Endothelial cell of umbilical vein (primary cell): ENCODE measurements at regions of chr16 and their contacts with region 1.

Region 1: GRCh38 chr16:87765776-87766484 is at the start of gene KLHDC4:
- DNase-seq: peak; percentile 86
- H3K4me3 ChIP-seq: peak within 1 kb of the TSS; percentile 55 to 82 (median 78)
- H3K27ac ChIP-seq: peak within 1 kb of the TSS; percentile 92
- H3K4me1 ChIP-seq: peaks cover 8% of the 10 kb centered on the region
- H3K27me3 ChIP-seq: no peaks in the 10 kb centered on the region
- CTCF ChIP-seq: no peak
- POLR2A ChIP-seq: peak; percentile 87
- total RNA-seq, gene KLHDC4: 46.2 and 46.7 TPM in 2 replicates

Region 2: GRCh38 chr16:87407511-87408112 is 358.3 kb before region 1 on chr16:
- CTCF ChIA-PET with region 1: no interaction called
- POLR2A ChIA-PET with region 1: no interaction called
- dilution Hi-C with region 1: no loop called
- intact Hi-C with region 1: loop called (anchors 10 kb)
- DNase-seq: peak; percentile 95
- H3K4me3 ChIP-seq: peak overlapping the region in 1 of 3 experiments; percentile 39
- H3K27ac ChIP-seq: peak overlapping the region; percentile 82
- H3K4me1 ChIP-seq: peaks cover 20% of the 10 kb centered on the region
- H3K27me3 ChIP-seq: no peaks in the 10 kb centered on the region
- CTCF ChIP-seq: no peak
- POLR2A ChIP-seq: peak; percentile 28

Region 3: GRCh38 chr16:87550496-87550961 is 215.4 kb before region 1 on chr16:
- CTCF ChIA-PET with region 1: interaction called, 7 read pairs
- POLR2A ChIA-PET with region 1: no interaction called
- dilution Hi-C with region 1: no loop called
- intact Hi-C with region 1: loop called (anchors 1 kb)
- DNase-seq: no peak
- H3K4me3 ChIP-seq: no peak overlapping the region
- H3K27ac ChIP-seq: no peak overlapping the region
- H3K4me1 ChIP-seq: no peaks in the 10 kb centered on the region
- H3K27me3 ChIP-seq: peaks cover 0 to 2% of the 10 kb centered on the region in 2 experiments
- CTCF ChIP-seq: peak; percentile 89 to 95
- POLR2A ChIP-seq: no peak

Region 4: GRCh38 chr16:87587636-87588035 is 178.3 kb before region 1 on chr16:
- CTCF ChIA-PET with region 1: interaction called, 198 read pairs
- POLR2A ChIA-PET with region 1: no interaction called
- dilution Hi-C with region 1: no loop called
- intact Hi-C with region 1: loop called (anchors 1 kb)
- DNase-seq: no peak
- H3K4me3 ChIP-seq: no peak overlapping the region
- H3K27ac ChIP-seq: no peak overlapping the region
- H3K4me1 ChIP-seq: peaks cover 14% of the 10 kb centered on the region
- H3K27me3 ChIP-seq: peaks cover 2 to 3% of the 10 kb centered on the region in 2 experiments
- CTCF ChIP-seq: no peak
- POLR2A ChIP-seq: no peak

Region 5: DNA sequence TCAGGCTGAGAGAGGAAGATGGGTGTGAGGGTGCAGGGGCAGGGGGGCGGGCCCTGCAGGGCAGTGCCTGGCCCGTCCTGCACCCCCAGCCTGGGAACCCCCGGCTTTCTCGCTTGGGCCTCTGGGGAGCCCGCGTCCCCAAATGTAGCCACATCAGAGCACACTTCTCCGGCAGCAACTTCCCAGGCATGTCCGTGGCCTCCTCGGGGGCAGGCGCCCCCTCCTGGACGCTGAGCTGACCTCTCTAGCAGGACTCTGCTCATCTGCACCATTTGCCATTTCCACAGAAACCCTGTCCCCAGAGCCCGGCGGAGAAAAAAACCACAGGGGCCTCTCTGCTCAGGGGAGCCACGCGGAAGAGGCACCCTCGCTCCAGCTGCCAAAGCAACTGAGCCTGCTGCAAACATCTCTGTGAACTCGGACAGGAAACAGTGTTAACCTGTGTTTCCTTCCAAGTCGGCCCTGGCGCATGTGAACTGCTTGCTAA is 63.6 kb before region 1 on chr16:
- CTCF ChIA-PET with region 1: interaction called, 6 read pairs
- POLR2A ChIA-PET with region 1: no interaction called
- dilution Hi-C with region 1: no loop called
- intact Hi-C with region 1: loop called (anchors 2 kb)
- DNase-seq: peak; percentile 84
- H3K4me3 ChIP-seq: no peak overlapping the region
- H3K27ac ChIP-seq: peak overlapping the region; percentile 3
- H3K4me1 ChIP-seq: peaks cover 24% of the 10 kb centered on the region
- H3K27me3 ChIP-seq: no peaks in the 10 kb centered on the region
- CTCF ChIP-seq: peak; percentile 73 to 84
- POLR2A ChIP-seq: no peak

Region 6: DNA sequence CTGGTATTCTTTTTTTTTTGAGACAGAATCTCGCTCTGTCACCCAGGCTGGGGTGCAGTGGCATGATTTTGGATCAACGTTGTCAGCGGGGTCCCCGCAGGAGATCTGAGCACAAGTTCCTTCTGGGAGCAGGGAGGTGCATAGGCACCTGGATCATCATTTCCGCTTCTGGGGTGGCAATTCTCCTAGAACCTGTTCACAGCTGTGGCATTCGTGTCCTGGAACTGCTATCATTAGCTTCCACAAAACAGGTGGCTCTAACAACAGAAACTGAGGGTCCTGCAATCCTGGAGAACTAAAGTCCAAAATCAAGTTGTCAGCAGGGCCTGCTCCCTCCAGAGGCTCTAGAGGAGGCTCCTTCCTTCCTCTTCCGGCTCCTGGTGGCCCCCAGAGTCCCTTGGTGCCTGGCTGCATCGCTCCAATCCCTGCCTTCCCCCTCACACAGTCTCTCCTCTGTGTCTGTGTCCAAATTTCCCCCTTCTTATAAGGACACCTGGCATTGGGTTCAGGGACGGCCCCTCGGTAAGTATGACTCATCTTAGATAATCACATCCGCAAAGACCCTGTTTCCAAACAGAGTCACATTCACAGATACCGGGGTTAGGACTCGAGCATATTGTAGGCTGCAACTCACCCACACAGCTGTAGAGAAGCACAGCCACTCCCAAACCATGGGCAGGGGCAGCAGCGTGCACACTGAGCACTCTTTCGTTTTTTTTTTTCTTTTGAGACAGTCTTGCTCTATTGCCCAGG is 43.4 kb after region 1 on chr16:
- CTCF ChIA-PET with region 1: no interaction called
- POLR2A ChIA-PET with region 1: no interaction called
- dilution Hi-C with region 1: no loop called
- intact Hi-C with region 1: no loop called
- DNase-seq: peak; percentile 7
- H3K4me3 ChIP-seq: no peak overlapping the region
- H3K27ac ChIP-seq: no peak overlapping the region
- H3K4me1 ChIP-seq: peaks cover 6% of the 10 kb centered on the region
- H3K27me3 ChIP-seq: no peaks in the 10 kb centered on the region
- CTCF ChIP-seq: no peak
- POLR2A ChIP-seq: no peak

Region 7: GRCh38 chr16:87834623-87835407 is 68.9 kb after region 1 on chr16:
- CTCF ChIA-PET with region 1: interaction called, 12 read pairs
- POLR2A ChIA-PET with region 1: interaction called, 5 read pairs
- dilution Hi-C with region 1: no loop called
- intact Hi-C with region 1: no loop called
- DNase-seq: no peak
- H3K4me3 ChIP-seq: no peak overlapping the region
- H3K27ac ChIP-seq: no peak overlapping the region
- H3K4me1 ChIP-seq: peaks cover 24% of the 10 kb centered on the region
- H3K27me3 ChIP-seq: no peaks in the 10 kb centered on the region
- CTCF ChIP-seq: no peak
- POLR2A ChIP-seq: no peak